IMR-90 (cell line): ENCODE measurements at regions of chr11 and their contacts with region 1.

Region 1: DNA sequence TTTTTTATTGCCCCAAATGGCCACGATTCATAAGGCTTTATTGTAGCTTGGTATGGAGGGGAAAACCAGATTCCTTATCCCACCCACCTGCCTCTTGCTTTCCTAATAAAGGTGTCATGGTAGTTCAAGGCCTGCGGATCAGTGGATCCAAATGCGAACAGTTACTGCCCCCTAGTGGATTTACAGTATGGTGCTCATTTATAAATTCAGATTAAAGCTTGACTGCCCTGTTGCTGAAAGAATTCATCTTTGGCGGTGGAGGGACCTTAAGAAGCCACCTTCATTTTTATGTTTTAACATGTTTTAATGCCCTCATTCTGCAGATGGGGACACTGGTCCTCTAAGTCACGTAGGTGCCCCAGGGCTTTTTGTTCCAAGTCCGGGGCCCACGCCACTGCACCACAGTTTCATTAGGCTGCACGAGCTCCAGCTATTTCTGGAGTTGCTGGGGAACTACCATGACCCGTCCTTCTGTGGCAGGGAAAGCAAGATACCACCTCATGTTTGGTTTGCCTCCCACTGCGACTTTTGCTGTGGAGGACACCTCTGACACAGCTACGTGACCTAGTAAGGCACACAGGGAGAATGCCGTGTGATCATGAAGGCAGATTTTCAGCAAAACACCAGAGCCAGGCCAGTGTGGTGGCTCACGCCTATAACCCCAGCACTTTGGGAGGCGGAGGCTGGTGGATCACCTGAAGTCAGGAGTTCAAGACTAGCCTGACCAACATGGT is 15.6 kb upstream of the INCENP start:
- DNase-seq: peak; percentile 74
- ATAC-seq: peak; percentile 30
- H3K4me3 ChIP-seq: no peak overlapping the region
- H3K27ac ChIP-seq: no peak overlapping the region
- H3K4me1 ChIP-seq: peaks cover 12% of the 10 kb centered on the region
- H3K27me3 ChIP-seq: no peaks in the 10 kb centered on the region
- CTCF ChIP-seq: peak; percentile 91
- POLR2A ChIP-seq: no peak
- RAD21 ChIP-seq: peak; percentile 87

Region 2: DNA sequence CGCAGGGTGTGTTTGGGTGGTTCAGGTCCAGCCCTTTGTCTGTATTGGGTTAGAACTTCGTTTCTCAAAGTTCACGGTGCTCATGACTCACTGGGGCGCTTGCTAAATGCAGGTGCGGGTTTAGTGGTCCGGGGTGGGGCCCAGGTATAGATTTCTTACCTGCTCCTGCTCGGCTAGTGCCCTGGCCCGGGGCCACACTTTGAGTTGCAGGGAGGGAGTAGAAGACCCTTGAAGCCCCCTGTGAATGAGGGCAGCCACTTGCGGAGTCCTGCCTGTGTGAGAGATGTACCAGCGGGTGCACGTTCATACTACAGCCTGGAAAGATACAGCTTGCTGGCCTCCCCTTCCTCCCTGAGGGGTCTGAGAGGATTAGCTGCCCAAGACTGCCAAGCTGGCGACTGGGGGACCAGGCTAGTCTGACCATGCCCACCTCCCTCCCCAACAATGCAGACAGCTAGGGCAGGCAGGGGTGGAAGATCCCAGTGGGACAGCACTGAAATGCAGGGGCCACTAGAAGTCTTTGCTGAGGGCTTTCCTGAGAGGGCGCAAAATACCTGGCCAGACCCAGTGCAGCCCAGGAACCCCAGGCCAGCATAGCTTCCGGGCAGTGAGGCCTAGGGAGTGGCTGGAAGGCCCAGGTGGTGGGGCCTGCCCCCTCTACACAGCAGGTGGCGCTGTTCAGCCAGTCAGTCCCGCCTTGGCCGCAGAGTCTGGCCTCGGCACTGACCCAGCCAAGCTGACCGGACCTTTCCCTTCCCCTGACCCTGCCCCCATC is 360.8 kb before region 1 on chr11:
- CTCF ChIA-PET with region 1: interaction called, 3 read pairs
- POLR2A ChIA-PET with region 1: no interaction called
- dilution Hi-C with region 1: no loop called
- in situ Hi-C with region 1: no loop called
- intact Hi-C with region 1: loop called (anchors 1 kb)
- DNase-seq: peak; percentile 59
- ATAC-seq: peak; percentile 86
- H3K4me3 ChIP-seq: no peak overlapping the region
- H3K27ac ChIP-seq: no peak overlapping the region
- H3K4me1 ChIP-seq: no peaks in the 10 kb centered on the region; the same call in 1 of the 2 replicates
- H3K27me3 ChIP-seq: no peaks in the 10 kb centered on the region; the same call in 1 of the 2 replicates
- CTCF ChIP-seq: peak; percentile 88
- POLR2A ChIP-seq: no peak
- RAD21 ChIP-seq: peak; percentile 84

Region 3: GRCh38 chr11:61899146-61899841 is 208.9 kb before region 1 on chr11:
- CTCF ChIA-PET with region 1: interaction called, 18 read pairs
- POLR2A ChIA-PET with region 1: no interaction called
- dilution Hi-C with region 1: no loop called
- in situ Hi-C with region 1: loop called (anchors 5 kb)
- intact Hi-C with region 1: loop called (anchors 1 kb)
- DNase-seq: peak; percentile 54
- ATAC-seq: peak; percentile 89
- H3K4me3 ChIP-seq: no peak overlapping the region
- H3K27ac ChIP-seq: no peak overlapping the region
- H3K4me1 ChIP-seq: no peaks in the 10 kb centered on the region
- H3K27me3 ChIP-seq: no peaks in the 10 kb centered on the region
- CTCF ChIP-seq: peak; percentile 98
- POLR2A ChIP-seq: no peak
- RAD21 ChIP-seq: peak; percentile 86

Region 4: GRCh38 chr11:61967116-61967923 is 140.9 kb before region 1 on chr11 and contains the start of gene FTH1:
- CTCF ChIA-PET with region 1: interaction called, 4 read pairs
- POLR2A ChIA-PET with region 1: interaction called, 8 read pairs
- dilution Hi-C with region 1: no loop called
- in situ Hi-C with region 1: no loop called
- intact Hi-C with region 1: loop called (anchors 2 kb)
- DNase-seq: peak; percentile 88
- ATAC-seq: peak; percentile 70
- H3K4me3 ChIP-seq: peak within 1 kb of the TSS; percentile 93
- H3K27ac ChIP-seq: peak within 1 kb of the TSS; percentile 96
- H3K4me1 ChIP-seq: peaks cover 19% of the 10 kb centered on the region
- H3K27me3 ChIP-seq: no peaks in the 10 kb centered on the region
- CTCF ChIP-seq: no peak
- POLR2A ChIP-seq: peak; percentile 98
- RAD21 ChIP-seq: no peak
- total RNA-seq, gene FTH1: 344 and 385 TPM in 2 replicates

Region 5: DNA sequence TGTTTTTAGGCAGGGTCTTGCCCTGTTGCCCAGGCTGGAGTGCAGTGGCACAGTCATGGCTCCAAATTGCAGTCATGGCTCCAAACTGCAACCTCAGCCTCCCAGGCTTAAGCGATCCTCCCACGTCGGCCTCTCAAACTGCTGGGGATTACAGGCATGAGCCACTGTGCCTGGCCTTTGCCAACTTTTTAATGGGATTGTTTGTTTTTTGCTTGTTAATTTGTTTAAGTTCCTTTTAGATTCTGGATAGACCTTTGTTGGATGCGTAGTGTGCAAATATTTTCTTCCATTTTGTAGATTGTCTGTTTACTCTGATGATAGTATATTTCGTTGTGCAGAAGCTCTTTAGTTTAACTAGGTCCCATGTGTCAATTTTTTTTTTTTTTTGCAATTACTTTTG is 71.8 kb after region 1 on chr11:
- CTCF ChIA-PET with region 1: no interaction called
- POLR2A ChIA-PET with region 1: no interaction called
- dilution Hi-C with region 1: no loop called
- in situ Hi-C with region 1: no loop called
- intact Hi-C with region 1: no loop called
- DNase-seq: no peak
- ATAC-seq: no peak
- H3K4me3 ChIP-seq: no peak overlapping the region
- H3K27ac ChIP-seq: no peak overlapping the region
- H3K4me1 ChIP-seq: no peaks in the 10 kb centered on the region
- H3K27me3 ChIP-seq: peaks cover 5% of the 10 kb centered on the region
- CTCF ChIP-seq: no peak
- POLR2A ChIP-seq: no peak
- RAD21 ChIP-seq: no peak